ENCODE measurements at regions of chr2 and their contacts with region 1.

Region 1: DNA sequence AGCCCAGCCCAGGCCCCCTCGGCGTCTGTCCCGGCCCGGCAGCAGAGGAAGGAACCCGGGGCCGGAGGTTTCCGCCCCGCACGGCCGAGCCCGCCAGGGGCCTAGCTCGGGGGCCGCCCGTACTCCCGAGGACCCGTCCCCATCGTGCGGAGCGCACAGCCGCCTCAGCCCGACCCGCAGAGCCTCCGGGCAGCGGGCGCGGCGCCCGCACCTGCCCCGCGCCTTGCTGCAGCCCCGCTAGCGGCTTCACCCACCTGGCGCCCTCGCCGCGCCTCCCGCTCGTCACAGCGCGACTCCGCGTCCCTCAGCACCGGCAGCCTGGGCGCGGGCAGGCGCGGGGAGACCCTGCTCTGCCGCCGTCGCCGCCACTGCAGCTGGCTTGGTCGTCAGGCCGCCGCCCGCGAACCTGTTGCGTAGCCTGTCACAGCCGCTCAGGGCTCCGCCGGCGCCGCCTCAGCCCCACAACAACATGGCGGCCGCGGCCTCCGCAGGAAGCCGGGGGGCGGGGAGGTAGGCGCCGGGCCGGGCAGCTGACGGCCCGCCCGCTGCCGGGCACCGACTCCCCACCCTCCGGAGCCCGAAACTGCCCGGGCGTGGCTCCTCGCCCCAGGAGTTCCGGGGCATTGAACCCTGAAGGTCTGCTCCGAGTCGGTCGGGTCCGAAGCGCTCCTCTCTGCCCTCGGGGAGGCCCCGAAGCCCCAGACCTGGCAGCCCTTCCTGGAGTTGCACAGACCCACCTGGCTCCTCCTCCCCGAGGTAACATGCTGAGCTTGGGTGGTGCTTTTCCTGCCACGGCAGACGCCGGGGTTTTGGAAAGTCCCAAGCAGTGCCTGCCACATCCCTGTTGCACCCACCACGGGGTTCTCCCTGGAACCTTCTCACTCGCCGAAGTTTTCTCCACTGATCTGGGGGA is at the start of gene ITSN2:
- DNase-seq: peak; percentile 84
- H3K4me3 Mint-ChIP-seq: peak within 1 kb of the TSS; percentile 82
- H3K27ac Mint-ChIP-seq: peak within 1 kb of the TSS; percentile 88
- H3K4me1 Mint-ChIP-seq: peaks cover 25% of the 10 kb centered on the region
- H3K27me3 Mint-ChIP-seq: no peaks in the 10 kb centered on the region
- total RNA-seq, gene ITSN2: 46.1 to 46.7 TPM

Region 2: GRCh38 chr2:24345937-24346336 is 14.4 kb before region 1 on chr2:
- CTCF ChIA-PET with region 1: interaction called, 3 read pairs
- intact Hi-C with region 1: loop called (anchors 2 kb)
- DNase-seq: no peak
- H3K4me3 Mint-ChIP-seq: no peak overlapping the region
- H3K27ac Mint-ChIP-seq: no peak overlapping the region
- H3K4me1 Mint-ChIP-seq: peaks cover 51% of the 10 kb centered on the region
- H3K27me3 Mint-ChIP-seq: no peaks in the 10 kb centered on the region